GM18951 (cell line): ENCODE measurements at regions of chr15 and their contacts with region 1.

Region 1: DNA sequence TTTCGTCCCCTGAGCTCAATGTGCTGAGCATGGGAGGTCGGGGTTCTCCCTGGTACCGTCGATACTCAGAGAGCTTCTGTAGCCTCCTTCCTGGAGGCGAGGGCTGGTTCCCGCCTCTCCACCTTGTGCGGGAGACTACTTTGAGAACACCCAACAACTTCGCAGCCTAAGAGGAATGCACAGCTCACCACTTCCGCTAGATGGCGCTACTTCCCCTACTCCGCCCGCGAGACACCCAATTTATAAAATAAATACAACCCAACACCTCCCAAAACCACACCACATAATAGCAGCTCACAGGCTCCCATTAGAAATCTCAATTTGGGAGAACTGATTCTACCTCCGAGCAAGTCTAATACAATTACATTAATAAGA is 1.2 kb downstream of the RGMA start:
- POLR2A ChIP-seq: no peak

Region 2: DNA sequence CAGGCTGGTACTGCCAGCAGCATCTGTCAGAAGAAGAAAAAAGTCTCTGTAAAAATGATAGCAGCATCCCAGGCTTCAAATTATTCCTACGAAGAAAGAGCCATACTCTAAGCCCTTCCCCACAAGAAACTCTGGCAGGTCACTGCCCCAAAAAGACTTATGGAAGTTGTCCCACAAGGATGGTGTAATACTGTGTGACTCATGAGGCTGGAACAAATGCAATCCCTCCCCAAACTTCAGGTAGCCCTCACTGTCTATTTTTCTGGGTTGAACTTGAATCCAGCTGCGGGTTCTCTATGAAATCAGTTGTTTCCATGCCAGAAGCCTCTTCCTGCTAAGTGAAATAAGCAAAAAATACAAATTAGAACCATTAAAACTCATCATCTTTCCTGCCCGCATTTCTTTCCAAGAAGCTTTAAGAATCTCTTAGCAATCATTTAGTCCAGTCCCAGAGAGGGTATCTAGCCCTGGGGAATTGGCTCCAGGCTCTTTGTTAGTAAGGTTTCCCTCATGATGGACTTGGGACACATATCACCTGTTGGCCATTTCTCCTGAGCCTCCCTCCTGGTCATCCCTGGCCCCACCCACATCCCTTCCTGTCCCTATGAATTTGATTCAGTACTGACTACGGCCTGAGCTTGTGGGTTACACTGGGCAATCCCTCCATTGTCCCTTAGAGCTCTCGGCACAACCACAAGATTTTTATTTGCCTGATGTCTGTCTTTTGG is 483.9 kb before region 1 on chr15:
- in situ Hi-C with region 1: no loop called
- POLR2A ChIP-seq: no peak

Region 3: GRCh38 chr15:94119923-94120775 is 1032.3 kb after region 1 on chr15:
- in situ Hi-C with region 1: loop called (anchors 25 kb)
- POLR2A ChIP-seq: no peak